ENCODE measurements at regions of chr1 and their contacts with region 1.

Region 1: DNA sequence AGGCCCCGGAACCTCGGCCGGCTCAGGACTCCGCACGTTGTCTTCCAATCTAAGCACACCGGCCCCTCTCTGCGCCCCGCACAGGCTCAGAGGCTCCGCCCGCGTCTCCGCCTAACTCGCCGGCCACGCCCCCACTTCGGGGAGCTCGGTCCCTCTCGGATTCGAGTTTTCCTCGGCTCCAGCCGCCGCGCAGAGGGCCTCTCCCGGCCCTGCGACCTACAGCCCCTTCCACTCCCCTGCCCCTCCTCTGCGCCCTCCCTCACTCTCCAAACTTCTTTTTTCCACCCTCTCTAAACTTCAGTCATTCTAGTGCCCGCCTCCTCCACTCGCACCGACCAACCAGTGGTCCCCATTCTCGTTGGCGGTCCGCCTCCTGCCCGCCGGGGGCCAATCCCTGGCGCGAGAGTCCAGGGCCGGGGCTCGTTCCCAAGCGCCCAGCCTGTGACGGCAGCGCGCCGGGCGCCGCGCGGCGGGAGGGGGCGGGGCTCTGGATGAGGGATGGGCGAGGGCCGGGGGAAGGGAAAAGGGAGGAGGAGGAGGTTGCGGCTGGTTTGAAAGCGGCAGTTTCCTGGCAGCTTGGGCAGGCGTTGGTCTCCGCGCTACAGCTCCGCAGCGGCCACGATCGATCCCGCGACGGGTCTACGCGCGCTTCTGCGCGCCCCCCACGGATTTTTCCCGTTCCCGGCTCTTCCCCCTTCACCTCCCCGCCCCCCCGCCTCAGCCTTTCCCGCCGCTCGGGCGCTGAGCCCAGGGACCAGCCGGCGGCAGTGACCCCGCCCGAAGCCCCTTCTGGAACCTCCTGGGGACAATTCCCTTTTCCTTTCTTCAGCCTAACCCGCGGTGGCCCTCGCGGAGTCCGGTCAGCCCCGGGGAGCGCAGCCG is at the start of gene MAGI3:
- DNase-seq: peak; percentile 97
- H3K4me3 Mint-ChIP-seq: peak within 1 kb of the TSS; percentile 92
- H3K27ac Mint-ChIP-seq: peak within 1 kb of the TSS; percentile 77
- H3K4me1 Mint-ChIP-seq: peaks cover 24% of the 10 kb centered on the region
- H3K27me3 Mint-ChIP-seq: no peaks in the 10 kb centered on the region
- total RNA-seq, gene MAGI3: 7.3 to 7.4 TPM

Region 2: DNA sequence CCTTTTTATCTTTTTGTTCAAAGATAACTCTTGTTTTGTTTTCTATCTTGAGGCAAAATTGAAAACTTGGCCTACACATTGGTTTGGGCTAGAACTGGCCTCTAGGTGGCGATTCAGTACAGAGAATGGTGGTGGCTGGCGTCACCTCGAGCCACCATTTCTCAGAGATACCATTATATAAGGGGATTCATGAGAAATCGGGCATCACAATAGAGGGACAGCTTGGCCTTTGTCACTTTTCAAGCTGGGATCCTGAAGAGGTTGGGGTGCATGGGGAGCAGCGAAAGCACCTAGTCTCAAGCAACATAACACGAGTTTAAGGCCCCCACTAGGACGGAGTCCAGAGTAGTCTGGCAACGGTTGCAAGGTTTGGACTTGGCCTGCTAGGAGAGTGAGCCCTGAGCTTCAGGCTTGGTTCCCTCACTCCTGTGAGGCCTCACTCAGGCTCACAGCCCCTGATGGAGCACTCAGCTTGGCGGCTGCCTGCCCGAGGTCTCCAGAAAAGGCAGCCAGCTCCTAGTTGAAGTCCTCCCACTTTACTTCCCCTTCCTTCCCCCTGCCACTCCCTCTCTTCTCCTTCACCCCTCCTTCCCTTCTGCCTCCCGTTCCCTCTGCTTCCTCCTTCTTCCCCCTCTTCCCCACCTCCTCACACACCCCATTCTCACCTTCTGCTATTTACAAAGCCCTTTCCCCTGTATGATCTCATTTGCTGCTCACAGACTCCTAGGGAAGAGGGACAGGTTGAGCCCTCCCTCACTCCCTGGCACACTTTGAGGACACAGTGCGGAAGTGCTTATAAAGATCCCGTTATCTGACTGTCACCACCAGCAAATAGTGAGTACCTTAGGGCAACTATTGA is 249.4 kb before region 1 on chr1:
- CTCF ChIA-PET with region 1: interaction called, 4 read pairs
- POLR2A ChIA-PET with region 1: no interaction called
- intact Hi-C with region 1: loop called (anchors 5 kb)
- DNase-seq: peak; percentile 67
- H3K4me3 Mint-ChIP-seq: no peak overlapping the region
- H3K27ac Mint-ChIP-seq: no peak overlapping the region
- H3K4me1 Mint-ChIP-seq: peaks cover 15% of the 10 kb centered on the region
- H3K27me3 Mint-ChIP-seq: no peaks in the 10 kb centered on the region

Region 3: GRCh38 chr1:113375878-113376277 is 14.3 kb before region 1 on chr1:
- CTCF ChIA-PET with region 1: no interaction called
- POLR2A ChIA-PET with region 1: no interaction called
- intact Hi-C with region 1: no loop called
- DNase-seq: no peak
- H3K4me3 Mint-ChIP-seq: no peak overlapping the region
- H3K27ac Mint-ChIP-seq: no peak overlapping the region
- H3K4me1 Mint-ChIP-seq: no peaks in the 10 kb centered on the region
- H3K27me3 Mint-ChIP-seq: peaks cover 11% of the 10 kb centered on the region

Region 4: DNA sequence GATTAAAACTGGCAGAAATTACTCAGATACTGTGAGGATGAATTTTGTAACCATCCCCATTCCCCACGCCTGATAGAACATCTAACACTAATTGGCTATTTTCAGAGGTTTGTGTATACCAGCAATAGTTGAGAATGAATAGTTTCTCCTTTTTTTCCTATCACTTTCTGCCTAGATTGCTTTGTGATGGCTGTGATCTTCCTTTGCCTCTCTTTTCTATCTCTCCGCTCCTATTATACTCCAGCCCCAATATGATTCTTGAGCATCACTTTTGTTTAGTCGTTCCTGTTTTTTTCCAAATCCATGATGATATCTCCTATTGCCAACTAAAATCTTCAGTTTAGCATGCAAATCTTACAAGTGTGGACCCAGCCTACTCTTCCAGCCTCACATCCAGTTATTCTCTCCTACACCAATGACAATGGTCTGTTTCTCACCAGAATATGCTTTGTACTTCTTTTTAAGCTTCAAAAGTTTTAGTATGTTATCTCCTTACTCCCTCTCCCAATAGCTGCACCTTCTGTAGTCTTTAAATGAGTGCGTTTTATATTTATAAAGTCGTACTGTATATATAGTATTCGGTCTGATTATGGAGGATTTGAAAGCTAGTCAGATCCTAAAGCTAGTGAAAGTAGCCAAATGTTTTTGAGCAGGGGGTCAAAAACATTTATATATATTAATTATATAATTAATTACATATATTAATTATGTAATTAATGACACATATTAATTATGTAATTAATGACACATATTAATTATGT is 25.3 kb after region 1 on chr1:
- CTCF ChIA-PET with region 1: interaction called, 3 read pairs
- POLR2A ChIA-PET with region 1: interaction called, 3 read pairs
- intact Hi-C with region 1: loop called (anchors 2 kb)
- DNase-seq: no peak
- H3K4me3 Mint-ChIP-seq: no peak overlapping the region
- H3K27ac Mint-ChIP-seq: no peak overlapping the region
- H3K4me1 Mint-ChIP-seq: peaks cover 3% of the 10 kb centered on the region
- H3K27me3 Mint-ChIP-seq: no peaks in the 10 kb centered on the region

Region 5: GRCh38 chr1:113593550-113594297 is 203.5 kb after region 1 on chr1:
- CTCF ChIA-PET with region 1: no interaction called
- POLR2A ChIA-PET with region 1: no interaction called
- intact Hi-C with region 1: no loop called
- DNase-seq: no peak
- H3K4me3 Mint-ChIP-seq: no peak overlapping the region
- H3K27ac Mint-ChIP-seq: no peak overlapping the region
- H3K4me1 Mint-ChIP-seq: no peaks in the 10 kb centered on the region
- H3K27me3 Mint-ChIP-seq: no peaks in the 10 kb centered on the region

Region 6: DNA sequence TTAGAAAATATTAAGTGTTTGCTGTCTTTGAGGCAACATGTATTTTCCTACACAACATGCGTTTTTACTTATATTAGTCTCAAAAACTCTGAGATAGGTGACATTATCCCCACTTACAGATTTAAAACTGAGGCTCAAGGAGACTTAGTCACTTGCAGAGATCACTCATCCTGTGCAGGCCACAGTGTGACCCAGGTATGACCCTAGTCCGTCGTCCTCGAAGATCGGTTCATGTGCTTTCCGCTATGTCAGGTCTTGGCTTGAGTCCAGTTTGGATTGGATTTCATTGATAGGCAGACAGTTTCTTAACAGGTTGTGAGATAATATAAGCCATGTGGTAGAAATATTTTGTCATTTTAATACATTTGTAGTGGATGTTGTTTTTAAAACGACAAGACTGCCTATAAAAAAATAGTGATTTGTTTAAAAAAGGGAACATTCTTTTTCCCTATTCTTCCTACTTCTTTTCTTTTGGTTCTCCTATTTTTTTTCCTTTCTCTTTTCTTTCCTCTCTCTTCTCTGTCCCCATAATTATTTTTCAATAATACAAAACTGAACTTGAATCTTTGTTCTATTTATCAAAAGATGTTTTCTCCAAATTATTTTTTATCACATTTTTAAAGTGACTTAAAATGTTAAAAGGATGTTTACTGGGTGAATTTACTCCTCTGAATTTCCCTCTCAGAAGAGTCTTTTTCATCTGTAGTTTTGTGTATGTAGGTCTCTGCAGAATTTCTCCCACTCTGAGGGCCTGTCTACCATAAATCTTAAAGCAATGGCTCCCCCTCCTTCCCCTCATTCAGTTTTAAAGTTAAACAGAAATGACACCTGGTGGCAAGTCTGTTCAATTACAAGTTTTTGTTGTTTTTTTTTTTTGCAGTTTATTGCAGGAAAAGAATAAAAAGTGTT is 287.3 kb after region 1 on chr1:
- CTCF ChIA-PET with region 1: interaction called, 3 read pairs
- POLR2A ChIA-PET with region 1: no interaction called
- intact Hi-C with region 1: loop called (anchors 10 kb)
- DNase-seq: no peak
- H3K4me3 Mint-ChIP-seq: no peak overlapping the region
- H3K27ac Mint-ChIP-seq: no peak overlapping the region
- H3K4me1 Mint-ChIP-seq: peaks cover 7% of the 10 kb centered on the region
- H3K27me3 Mint-ChIP-seq: no peaks in the 10 kb centered on the region

Region 7: GRCh38 chr1:113759333-113760101 is 369.3 kb after region 1 on chr1 and contains the start of gene PHTF1:
- CTCF ChIA-PET with region 1: interaction called, 3 read pairs
- POLR2A ChIA-PET with region 1: interaction called, 3 read pairs
- intact Hi-C with region 1: loop called (anchors 10 kb)
- DNase-seq: peak; percentile 76
- H3K4me3 Mint-ChIP-seq: peak within 1 kb of the TSS; percentile 87
- H3K27ac Mint-ChIP-seq: peak within 1 kb of the TSS; percentile 99
- H3K4me1 Mint-ChIP-seq: peaks cover 26% of the 10 kb centered on the region
- H3K27me3 Mint-ChIP-seq: no peaks in the 10 kb centered on the region
- total RNA-seq, gene PHTF1: 12.6 to 12.9 TPM

Region 8: DNA sequence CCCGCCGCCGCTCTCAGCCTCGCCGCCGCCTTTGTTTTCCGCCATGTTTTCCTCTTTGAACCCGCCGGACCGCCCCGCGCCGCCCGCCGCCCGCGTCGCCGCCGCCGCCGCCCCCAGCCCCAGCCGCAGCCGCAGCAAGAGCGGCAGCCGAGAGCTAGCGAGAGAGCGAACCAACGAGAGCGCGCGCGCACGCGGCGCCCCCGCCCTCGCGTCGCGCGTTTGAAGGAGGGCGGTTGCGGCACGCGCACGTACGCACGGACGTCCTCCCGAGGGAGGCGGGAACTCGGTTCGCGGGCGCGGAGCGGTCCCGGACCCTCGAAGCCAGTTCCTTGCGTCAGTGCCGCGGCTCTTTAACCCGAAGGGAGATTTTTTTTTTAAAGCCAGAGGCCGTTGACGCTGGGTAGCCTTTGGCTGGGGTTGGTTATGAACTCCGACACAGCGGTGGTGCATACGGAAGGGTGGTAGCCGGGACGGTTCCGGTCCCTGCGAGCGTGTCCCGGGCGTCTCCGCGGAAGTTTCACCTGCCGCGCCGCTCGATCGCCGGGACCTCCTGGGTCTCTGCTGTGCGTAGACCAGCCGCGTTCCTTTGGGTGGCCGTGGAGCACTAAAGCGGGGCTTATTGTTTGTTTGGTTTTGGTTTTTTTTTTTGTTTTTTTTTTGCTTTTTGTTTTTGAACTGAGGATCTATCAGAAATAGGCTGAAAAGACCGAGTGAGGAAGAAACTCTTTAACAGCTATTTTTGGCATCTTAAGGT is 1121.0 kb after region 1 on chr1 and contains the start of gene TRIM33:
- CTCF ChIA-PET with region 1: no interaction called
- POLR2A ChIA-PET with region 1: no interaction called
- intact Hi-C with region 1: loop called (anchors 2 kb)
- DNase-seq: peak; percentile 95
- H3K4me3 Mint-ChIP-seq: peak within 1 kb of the TSS; percentile 91
- H3K27ac Mint-ChIP-seq: peak within 1 kb of the TSS; percentile 98
- H3K4me1 Mint-ChIP-seq: peaks cover 41% of the 10 kb centered on the region
- H3K27me3 Mint-ChIP-seq: no peaks in the 10 kb centered on the region
- total RNA-seq, gene TRIM33: 26.9 to 27.9 TPM